ENCODE measurements at regions of chr2 and their contacts with region 1.

Region 1: DNA sequence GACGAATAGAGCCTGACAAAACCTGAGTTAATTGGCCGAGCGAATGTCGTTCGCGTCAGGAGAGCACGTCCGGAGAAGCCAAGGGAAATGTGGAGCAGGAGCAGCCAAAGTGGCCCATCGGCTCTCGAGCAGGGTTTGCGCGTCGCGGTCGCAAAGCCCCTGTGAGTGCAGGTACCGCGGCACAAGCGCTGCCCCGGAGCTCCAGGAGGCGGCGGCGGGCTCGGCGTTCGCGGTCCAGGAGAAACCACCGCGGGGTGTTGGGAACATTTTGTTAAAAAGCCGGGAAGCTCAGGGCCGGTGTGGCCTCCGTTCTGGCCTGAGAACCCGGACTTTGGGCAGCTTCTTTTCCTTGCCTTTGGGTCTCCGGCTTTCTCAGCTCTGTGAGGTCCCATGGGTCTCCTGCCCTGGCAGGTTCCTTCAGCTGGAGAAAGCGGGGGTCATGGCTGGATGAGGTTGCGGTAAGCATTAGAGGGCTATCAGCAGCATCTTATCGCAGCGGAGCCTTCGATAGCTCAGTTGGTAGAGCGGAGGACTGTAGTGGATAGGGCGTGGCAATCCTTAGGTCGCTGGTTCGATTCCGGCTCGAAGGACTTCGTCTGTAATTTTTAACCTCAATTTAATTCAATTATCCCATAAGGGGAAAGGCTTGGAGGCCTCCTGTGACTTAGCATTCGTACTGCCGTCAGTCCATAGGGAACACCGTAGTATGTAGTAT is 1.0 kb upstream of the AGBL5 start:
- DNase-seq: peak; percentile 96
- ATAC-seq: peak; percentile 73
- H3K4me3 Mint-ChIP-seq: peak overlapping the region; percentile 90
- H3K27ac Mint-ChIP-seq: peak overlapping the region; percentile 99
- H3K4me1 Mint-ChIP-seq: peaks cover 20% of the 10 kb centered on the region
- H3K27me3 Mint-ChIP-seq: peaks cover 6% of the 10 kb centered on the region
- CTCF ChIP-seq: peak; percentile 51

Region 2: GRCh38 chr2:26942543-26943295 is 107.7 kb before region 1 on chr2:
- CTCF ChIA-PET with region 1: no interaction called
- POLR2A ChIA-PET with region 1: no interaction called
- intact Hi-C with region 1: no loop called
- DNase-seq: peak; percentile 84
- ATAC-seq: peak; percentile 69
- H3K4me3 Mint-ChIP-seq: no peak overlapping the region
- H3K27ac Mint-ChIP-seq: no peak overlapping the region
- H3K4me1 Mint-ChIP-seq: peaks cover 2% of the 10 kb centered on the region
- H3K27me3 Mint-ChIP-seq: peaks cover 5% of the 10 kb centered on the region
- CTCF ChIP-seq: peak; percentile 86

Region 3: GRCh38 chr2:27032495-27033252 is 17.8 kb before region 1 on chr2 and contains the start of gene TMEM214:
- CTCF ChIA-PET with region 1: interaction called, 10 read pairs
- POLR2A ChIA-PET with region 1: interaction called, 23 read pairs
- intact Hi-C with region 1: no loop called
- DNase-seq: peak; percentile 85
- ATAC-seq: peak; percentile 95
- H3K4me3 Mint-ChIP-seq: peak within 1 kb of the TSS; percentile 94
- H3K27ac Mint-ChIP-seq: peak within 1 kb of the TSS; percentile 88
- H3K4me1 Mint-ChIP-seq: peaks cover 33% of the 10 kb centered on the region
- H3K27me3 Mint-ChIP-seq: no peaks in the 10 kb centered on the region
- CTCF ChIP-seq: no peak
- total RNA-seq, gene TMEM214: 54.1 to 58.9 TPM

Region 4: GRCh38 chr2:27071277-27071989 is 21.0 kb after region 1 on chr2 and contains the start of gene OST4:
- CTCF ChIA-PET with region 1: interaction called, 32 read pairs
- POLR2A ChIA-PET with region 1: interaction called, 8 read pairs
- intact Hi-C with region 1: no loop called
- DNase-seq: peak; percentile 91
- ATAC-seq: peak; percentile 92
- H3K4me3 Mint-ChIP-seq: peak within 1 kb of the TSS; percentile 98
- H3K27ac Mint-ChIP-seq: peak within 1 kb of the TSS; percentile 95
- H3K4me1 Mint-ChIP-seq: peaks cover 68% of the 10 kb centered on the region
- H3K27me3 Mint-ChIP-seq: no peaks in the 10 kb centered on the region
- CTCF ChIP-seq: no peak
- total RNA-seq, gene OST4: 257 to 262 TPM

Region 5: GRCh38 chr2:27086090-27086723 is 35.8 kb after region 1 on chr2:
- CTCF ChIA-PET with region 1: interaction called, 20 read pairs
- POLR2A ChIA-PET with region 1: interaction called, 10 read pairs
- intact Hi-C with region 1: no loop called
- DNase-seq: peak; percentile 96
- ATAC-seq: peak; percentile 90
- H3K4me3 Mint-ChIP-seq: peak overlapping the region; percentile 82
- H3K27ac Mint-ChIP-seq: peak overlapping the region; percentile 84
- H3K4me1 Mint-ChIP-seq: peaks cover 21% of the 10 kb centered on the region
- H3K27me3 Mint-ChIP-seq: no peaks in the 10 kb centered on the region
- CTCF ChIP-seq: peak; percentile 92

Region 6: DNA sequence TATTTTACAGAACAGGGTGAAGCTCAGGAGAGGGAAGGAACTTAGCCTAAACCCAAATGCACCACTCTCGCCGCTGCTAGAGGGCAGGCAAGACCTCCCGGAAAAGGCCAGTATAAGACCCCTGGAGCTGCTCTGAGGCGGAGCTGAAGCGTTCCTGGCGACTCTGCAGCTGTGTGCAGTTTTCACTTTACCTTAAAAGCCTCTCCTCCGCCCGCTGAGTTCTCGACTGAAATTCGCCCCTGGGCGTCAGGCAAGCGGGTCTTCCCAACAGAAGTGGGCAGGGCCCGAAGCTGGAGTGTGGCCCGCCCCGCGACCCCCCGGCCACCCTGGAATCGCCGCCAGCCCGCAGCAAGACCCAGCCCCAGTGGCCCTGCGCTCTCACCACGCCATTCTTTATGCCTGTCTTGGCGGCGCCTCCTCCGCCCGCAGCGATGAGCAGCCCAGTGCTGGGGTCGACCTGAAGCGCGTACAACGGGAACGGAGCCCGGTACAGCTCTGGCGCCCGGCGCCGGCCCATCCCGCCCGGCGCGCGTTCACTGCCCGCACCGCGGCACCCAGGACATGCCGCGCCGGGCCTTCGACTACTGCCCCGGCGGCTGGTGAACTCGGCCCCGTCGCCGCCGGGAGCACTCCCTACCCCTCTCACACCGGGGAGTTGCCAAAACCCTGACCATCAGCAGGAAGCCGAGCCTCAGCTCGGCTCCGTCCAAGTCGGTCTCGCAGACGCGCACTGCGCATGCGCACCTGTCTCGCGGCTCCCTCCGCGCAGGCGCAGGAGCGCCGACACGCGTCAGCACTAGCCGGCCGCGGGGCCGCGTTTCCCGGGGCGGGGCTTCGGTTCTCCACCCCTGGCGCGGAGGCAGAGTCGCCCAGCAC is 83.7 kb after region 1 on chr2 and contains the start of gene PREB:
- CTCF ChIA-PET with region 1: no interaction called
- POLR2A ChIA-PET with region 1: interaction called, 12 read pairs
- intact Hi-C with region 1: no loop called
- DNase-seq: peak; percentile 98
- ATAC-seq: peak; percentile 99
- H3K4me3 Mint-ChIP-seq: peak within 1 kb of the TSS; percentile 88
- H3K27ac Mint-ChIP-seq: peak within 1 kb of the TSS; percentile 95
- H3K4me1 Mint-ChIP-seq: peaks cover 16% of the 10 kb centered on the region
- H3K27me3 Mint-ChIP-seq: no peaks in the 10 kb centered on the region
- CTCF ChIP-seq: no peak
- total RNA-seq, gene PREB: 60.5 to 63.2 TPM

Region 7: GRCh38 chr2:27174316-27175040 is 124.0 kb after region 1 on chr2:
- CTCF ChIA-PET with region 1: no interaction called
- POLR2A ChIA-PET with region 1: no interaction called
- intact Hi-C with region 1: no loop called
- DNase-seq: no peak
- ATAC-seq: no peak
- H3K4me3 Mint-ChIP-seq: no peak overlapping the region
- H3K27ac Mint-ChIP-seq: no peak overlapping the region
- H3K4me1 Mint-ChIP-seq: peaks cover 2% of the 10 kb centered on the region
- H3K27me3 Mint-ChIP-seq: peaks cover 17% of the 10 kb centered on the region
- CTCF ChIP-seq: no peak